ENCODE measurements at regions of chr7 and their contacts with region 1.

Region 1: DNA sequence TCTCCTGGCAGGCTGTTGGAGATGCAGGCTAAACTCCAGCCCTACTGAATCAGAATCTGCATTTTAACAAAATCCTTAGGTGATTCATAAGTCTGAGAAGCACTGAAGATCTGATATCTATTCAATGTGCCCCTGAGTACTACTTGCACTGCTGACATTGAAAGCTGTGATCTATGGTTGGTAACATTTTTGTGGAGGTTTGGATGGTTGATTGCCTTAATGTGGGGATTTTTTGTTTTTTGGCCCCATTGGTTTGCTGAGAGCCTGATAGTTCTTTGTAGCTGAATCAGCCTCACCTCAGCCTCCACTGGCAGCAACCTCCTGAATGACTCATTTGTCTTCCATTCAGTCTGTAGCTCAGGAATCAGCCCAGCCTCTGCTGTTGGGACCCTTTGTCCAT is 14.7 kb upstream of the LRRN3 start:
- DNase-seq: no peak
- ATAC-seq: no peak
- H3K4me3 ChIP-seq: no peak overlapping the region
- H3K4me3 Mint-ChIP-seq: no peak overlapping the region
- H3K27ac ChIP-seq: no peak overlapping the region
- H3K27ac Mint-ChIP-seq: no peak overlapping the region
- H3K4me1 ChIP-seq: peaks cover 49% of the 10 kb centered on the region
- H3K4me1 Mint-ChIP-seq: peaks cover 60% of the 10 kb centered on the region
- H3K27me3 ChIP-seq: no peaks in the 10 kb centered on the region
- H3K27me3 Mint-ChIP-seq: no peaks in the 10 kb centered on the region
- CTCF ChIP-seq: no peak

Region 2: GRCh38 chr7:110645060-110645459 is 431.1 kb before region 1 on chr7:
- CTCF ChIA-PET with region 1: no interaction called
- POLR2A ChIA-PET with region 1: no interaction called
- intact Hi-C with region 1: no loop called
- DNase-seq: no peak
- ATAC-seq: no peak
- H3K4me3 ChIP-seq: no peak overlapping the region
- H3K4me3 Mint-ChIP-seq: no peak overlapping the region
- H3K27ac ChIP-seq: no peak overlapping the region
- H3K27ac Mint-ChIP-seq: no peak overlapping the region
- H3K4me1 ChIP-seq: no peaks in the 10 kb centered on the region
- H3K4me1 Mint-ChIP-seq: no peaks in the 10 kb centered on the region
- H3K27me3 ChIP-seq: no peaks in the 10 kb centered on the region
- H3K27me3 Mint-ChIP-seq: no peaks in the 10 kb centered on the region
- CTCF ChIP-seq: no peak

Region 3: DNA sequence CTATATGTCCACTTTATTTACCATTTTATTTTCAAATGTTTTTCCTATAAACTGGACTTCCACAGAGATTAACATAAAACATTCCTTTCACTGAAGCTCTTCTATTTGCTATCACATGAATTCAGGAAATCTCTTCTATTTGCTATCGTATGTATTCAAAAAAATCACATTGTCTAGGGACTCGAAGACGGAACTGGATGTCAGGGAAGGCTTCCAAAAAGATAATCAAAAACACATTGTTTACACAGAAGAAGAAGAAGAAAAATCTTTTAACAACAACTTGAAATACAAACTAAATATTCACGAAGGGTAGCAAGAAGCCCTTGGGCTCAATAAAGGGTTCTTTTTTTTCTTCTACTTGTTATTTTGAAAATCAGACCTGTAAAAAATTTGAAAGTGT is 411.4 kb before region 1 on chr7:
- CTCF ChIA-PET with region 1: no interaction called
- POLR2A ChIA-PET with region 1: no interaction called
- intact Hi-C with region 1: no loop called
- DNase-seq: no peak
- ATAC-seq: no peak
- H3K4me3 ChIP-seq: no peak overlapping the region
- H3K4me3 Mint-ChIP-seq: no peak overlapping the region
- H3K27ac ChIP-seq: no peak overlapping the region
- H3K27ac Mint-ChIP-seq: no peak overlapping the region
- H3K4me1 ChIP-seq: no peaks in the 10 kb centered on the region
- H3K4me1 Mint-ChIP-seq: no peaks in the 10 kb centered on the region
- H3K27me3 ChIP-seq: no peaks in the 10 kb centered on the region
- H3K27me3 Mint-ChIP-seq: no peaks in the 10 kb centered on the region
- CTCF ChIP-seq: no peak

Region 4: GRCh38 chr7:111059833-111060232 is 16.4 kb before region 1 on chr7:
- CTCF ChIA-PET with region 1: interaction called, 5 read pairs
- POLR2A ChIA-PET with region 1: interaction called, 3 read pairs
- intact Hi-C with region 1: loop called in 1 of 2 experiments (anchors 2 kb)
- DNase-seq: no peak
- ATAC-seq: no peak
- H3K4me3 ChIP-seq: no peak overlapping the region
- H3K4me3 Mint-ChIP-seq: no peak overlapping the region
- H3K27ac ChIP-seq: no peak overlapping the region
- H3K27ac Mint-ChIP-seq: no peak overlapping the region
- H3K4me1 ChIP-seq: peaks cover 14% of the 10 kb centered on the region
- H3K4me1 Mint-ChIP-seq: peaks cover 23% of the 10 kb centered on the region
- H3K27me3 ChIP-seq: no peaks in the 10 kb centered on the region
- H3K27me3 Mint-ChIP-seq: no peaks in the 10 kb centered on the region
- CTCF ChIP-seq: no peak

Region 5: GRCh38 chr7:111108496-111108895 is 32.3 kb after region 1 on chr7:
- CTCF ChIA-PET with region 1: no interaction called
- POLR2A ChIA-PET with region 1: no interaction called
- intact Hi-C with region 1: no loop called
- DNase-seq: no peak
- ATAC-seq: no peak
- H3K4me3 ChIP-seq: no peak overlapping the region
- H3K4me3 Mint-ChIP-seq: no peak overlapping the region
- H3K27ac ChIP-seq: no peak overlapping the region
- H3K27ac Mint-ChIP-seq: peak overlapping the region; percentile 27
- H3K4me1 ChIP-seq: peaks cover 16% of the 10 kb centered on the region
- H3K4me1 Mint-ChIP-seq: peaks cover 71% of the 10 kb centered on the region
- H3K27me3 ChIP-seq: no peaks in the 10 kb centered on the region
- H3K27me3 Mint-ChIP-seq: no peaks in the 10 kb centered on the region
- CTCF ChIP-seq: no peak

Region 6: GRCh38 chr7:111138196-111138569 is 62.0 kb after region 1 on chr7:
- CTCF ChIA-PET with region 1: no interaction called
- POLR2A ChIA-PET with region 1: no interaction called
- intact Hi-C with region 1: no loop called
- DNase-seq: peak; percentile 3 to 76 (median 40)
- ATAC-seq: peak; percentile 92
- H3K4me3 ChIP-seq: no peak overlapping the region
- H3K4me3 Mint-ChIP-seq: peak overlapping the region; percentile 12
- H3K27ac ChIP-seq: peak overlapping the region in 1 of 2 experiments; percentile 20
- H3K27ac Mint-ChIP-seq: peak overlapping the region; percentile 72
- H3K4me1 ChIP-seq: peaks cover 15% of the 10 kb centered on the region
- H3K4me1 Mint-ChIP-seq: peaks cover 28% of the 10 kb centered on the region
- H3K27me3 ChIP-seq: no peaks in the 10 kb centered on the region
- H3K27me3 Mint-ChIP-seq: no peaks in the 10 kb centered on the region
- CTCF ChIP-seq: no peak

Measured in CD8-positive, alpha-beta T cell (primary cell).